ENCODE measurements at regions of chr5 and their contacts with region 1.

Region 1: DNA sequence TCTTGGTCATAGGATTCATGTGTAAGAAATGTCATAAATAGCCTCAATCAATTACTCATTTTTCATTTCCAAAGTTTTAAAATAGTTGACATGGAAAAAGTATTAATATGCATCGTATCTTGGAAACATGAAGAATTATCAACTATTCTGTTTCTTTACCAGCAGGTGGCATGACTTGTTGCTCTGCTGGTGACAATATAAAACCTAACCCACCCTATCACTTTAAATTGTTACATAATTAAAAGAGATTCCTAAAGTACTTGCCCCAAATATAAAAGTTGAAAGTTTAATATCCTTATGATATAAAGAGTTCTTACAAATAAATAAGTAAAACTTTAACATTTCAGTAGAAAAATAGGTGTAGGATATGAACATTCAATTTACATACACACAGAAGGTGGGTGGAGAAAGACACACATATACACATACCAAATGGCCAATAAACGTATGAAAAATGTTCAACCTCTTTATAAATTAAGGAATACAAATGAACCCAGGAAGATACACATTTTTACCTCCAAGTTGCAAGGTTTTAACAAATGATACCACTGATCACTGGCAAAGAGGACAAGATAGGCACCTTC is 30.6 kb downstream of the MAP1B start:
- DNase-seq: peak in 1 of 2 donors; percentile 45
- ATAC-seq: peak in 2 of 3 donors; percentile 65 to 67
- H3K4me3 ChIP-seq: no peak overlapping the region
- H3K4me3 Mint-ChIP-seq: no peak overlapping the region
- H3K27ac ChIP-seq: no peak overlapping the region
- H3K27ac Mint-ChIP-seq: no peak overlapping the region
- H3K4me1 ChIP-seq: no peaks in the 10 kb centered on the region
- H3K4me1 Mint-ChIP-seq: peaks cover 9 to 15% of the 10 kb centered on the region in 2 donors
- H3K27me3 ChIP-seq: peaks cover 13% of the 10 kb centered on the region
- H3K27me3 Mint-ChIP-seq: peaks cover 40 to 53% of the 10 kb centered on the region in 2 donors
- CTCF ChIP-seq: peak; percentile 80

Region 2: DNA sequence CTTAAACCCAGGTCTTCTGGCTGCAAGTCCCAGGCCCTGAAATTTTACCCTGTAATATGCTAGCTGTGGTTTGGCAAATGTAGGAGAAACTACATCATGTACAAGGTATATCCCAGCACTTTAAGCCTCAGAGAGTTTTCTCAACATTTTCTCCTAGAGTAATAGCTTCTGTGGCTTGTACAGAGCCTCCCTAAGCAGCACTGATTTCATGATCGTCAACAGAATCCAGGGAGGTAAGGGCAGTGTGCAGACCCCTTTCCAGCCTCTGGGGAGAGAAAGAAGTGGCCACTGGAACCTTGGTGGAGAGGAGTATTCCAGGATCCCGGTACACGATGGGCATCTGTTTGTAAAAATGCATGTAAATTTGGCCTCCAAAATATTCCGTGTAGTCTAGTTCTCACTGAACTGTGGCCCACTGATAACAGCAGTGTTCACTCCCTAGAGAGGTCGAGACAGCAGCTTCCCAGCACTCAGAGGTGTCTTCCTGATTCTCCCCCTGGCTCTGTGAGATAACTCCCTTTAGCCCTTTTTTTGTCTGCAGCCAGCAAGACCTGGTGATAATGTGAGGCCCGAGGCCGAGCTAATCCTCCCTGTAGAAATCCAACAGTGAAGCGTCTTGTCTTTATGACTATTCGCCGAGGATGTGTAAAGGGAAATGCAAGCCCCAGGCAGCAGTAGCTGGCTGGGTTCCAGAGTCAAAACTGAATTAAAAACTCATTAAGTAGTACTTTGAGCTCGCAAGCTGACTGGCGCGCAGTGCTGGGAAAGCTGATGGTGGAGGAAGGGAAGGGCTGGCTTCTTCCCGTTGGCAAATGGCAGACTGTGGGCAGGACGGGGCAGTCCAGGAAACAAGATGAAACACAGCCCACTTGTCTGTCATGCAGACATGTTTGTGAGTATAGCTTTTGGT is 28.4 kb after region 1 on chr5:
- intact Hi-C with region 1: no loop called
- DNase-seq: no peak
- ATAC-seq: no peak
- H3K4me3 ChIP-seq: no peak overlapping the region
- H3K4me3 Mint-ChIP-seq: no peak overlapping the region
- H3K27ac ChIP-seq: no peak overlapping the region
- H3K27ac Mint-ChIP-seq: no peak overlapping the region
- H3K4me1 ChIP-seq: no peaks in the 10 kb centered on the region
- H3K4me1 Mint-ChIP-seq: no peaks in the 10 kb centered on the region
- H3K27me3 ChIP-seq: peaks cover 3% of the 10 kb centered on the region
- H3K27me3 Mint-ChIP-seq: peaks cover 27 to 42% of the 10 kb centered on the region in 2 donors
- CTCF ChIP-seq: no peak

Region 3: GRCh38 chr5:72244862-72245371 is 107.0 kb after region 1 on chr5:
- intact Hi-C with region 1: loop called (anchors 1 kb)
- DNase-seq: peak in 1 of 2 donors; percentile 14
- ATAC-seq: peak; percentile 68 to 92 (median 89)
- H3K4me3 ChIP-seq: no peak overlapping the region
- H3K4me3 Mint-ChIP-seq: peak overlapping the region; percentile 7
- H3K27ac ChIP-seq: no peak overlapping the region
- H3K27ac Mint-ChIP-seq: peak overlapping the region in 1 of 2 donors; percentile 74
- H3K4me1 ChIP-seq: no peaks in the 10 kb centered on the region
- H3K4me1 Mint-ChIP-seq: peaks cover 32 to 33% of the 10 kb centered on the region in 2 donors
- H3K27me3 ChIP-seq: no peaks in the 10 kb centered on the region
- H3K27me3 Mint-ChIP-seq: peaks cover 0 to 4% of the 10 kb centered on the region in 2 donors
- CTCF ChIP-seq: peak; percentile 54

Region 4: GRCh38 chr5:72255237-72255636 is 117.3 kb after region 1 on chr5:
- intact Hi-C with region 1: no loop called
- DNase-seq: no peak
- ATAC-seq: no peak
- H3K4me3 ChIP-seq: no peak overlapping the region
- H3K4me3 Mint-ChIP-seq: no peak overlapping the region
- H3K27ac ChIP-seq: no peak overlapping the region
- H3K27ac Mint-ChIP-seq: no peak overlapping the region
- H3K4me1 ChIP-seq: no peaks in the 10 kb centered on the region
- H3K4me1 Mint-ChIP-seq: peaks cover 13 to 14% of the 10 kb centered on the region in 2 donors
- H3K27me3 ChIP-seq: no peaks in the 10 kb centered on the region
- H3K27me3 Mint-ChIP-seq: no peaks in the 10 kb centered on the region
- CTCF ChIP-seq: no peak

Region 5: GRCh38 chr5:72268753-72269410 is 131.0 kb after region 1 on chr5:
- intact Hi-C with region 1: loop called (anchors 1 kb)
- DNase-seq: peak; percentile 23 to 69
- ATAC-seq: peak in 2 of 3 donors; percentile 57 to 69
- H3K4me3 ChIP-seq: no peak overlapping the region
- H3K4me3 Mint-ChIP-seq: no peak overlapping the region
- H3K27ac ChIP-seq: no peak overlapping the region
- H3K27ac Mint-ChIP-seq: no peak overlapping the region
- H3K4me1 ChIP-seq: no peaks in the 10 kb centered on the region
- H3K4me1 Mint-ChIP-seq: peaks cover 4 to 12% of the 10 kb centered on the region in 2 donors
- H3K27me3 ChIP-seq: no peaks in the 10 kb centered on the region
- H3K27me3 Mint-ChIP-seq: no peaks in the 10 kb centered on the region
- CTCF ChIP-seq: peak; percentile 76

Measured in natural killer cell (primary cell).